ENCODE measurements at regions of chr17 and their contacts with region 1.

Region 1: GRCh38 chr17:45197555-45198334 is 23.9 kb upstream of the FMNL1 start:
- DNase-seq: peak; percentile 74 to 84 (median 76)
- H3K4me3 ChIP-seq: no peak overlapping the region
- H3K4me3 Mint-ChIP-seq: no peak overlapping the region
- H3K27ac ChIP-seq: no peak overlapping the region
- H3K27ac Mint-ChIP-seq: no peak overlapping the region
- H3K4me1 ChIP-seq: no peaks in the 10 kb centered on the region
- H3K4me1 Mint-ChIP-seq: peaks cover 0 to 4% (median 2%) of the 10 kb centered on the region in 4 donors
- H3K27me3 ChIP-seq: no peaks in the 10 kb centered on the region
- H3K27me3 Mint-ChIP-seq: no peaks in the 10 kb centered on the region

Region 2: GRCh38 chr17:44677136-44677535 is 520.6 kb before region 1 on chr17:
- CTCF ChIA-PET with region 1: no interaction called
- POLR2A ChIA-PET with region 1: no interaction called
- intact Hi-C with region 1: no loop called
- DNase-seq: no peak
- H3K4me3 ChIP-seq: no peak overlapping the region
- H3K4me3 Mint-ChIP-seq: no peak overlapping the region
- H3K27ac ChIP-seq: no peak overlapping the region
- H3K27ac Mint-ChIP-seq: peak overlapping the region in 1 of 7 donors; percentile 3
- H3K4me1 ChIP-seq: no peaks in the 10 kb centered on the region
- H3K4me1 Mint-ChIP-seq: no peaks in the 10 kb centered on the region
- H3K27me3 ChIP-seq: no peaks in the 10 kb centered on the region
- H3K27me3 Mint-ChIP-seq: no peaks in the 10 kb centered on the region

Region 3: DNA sequence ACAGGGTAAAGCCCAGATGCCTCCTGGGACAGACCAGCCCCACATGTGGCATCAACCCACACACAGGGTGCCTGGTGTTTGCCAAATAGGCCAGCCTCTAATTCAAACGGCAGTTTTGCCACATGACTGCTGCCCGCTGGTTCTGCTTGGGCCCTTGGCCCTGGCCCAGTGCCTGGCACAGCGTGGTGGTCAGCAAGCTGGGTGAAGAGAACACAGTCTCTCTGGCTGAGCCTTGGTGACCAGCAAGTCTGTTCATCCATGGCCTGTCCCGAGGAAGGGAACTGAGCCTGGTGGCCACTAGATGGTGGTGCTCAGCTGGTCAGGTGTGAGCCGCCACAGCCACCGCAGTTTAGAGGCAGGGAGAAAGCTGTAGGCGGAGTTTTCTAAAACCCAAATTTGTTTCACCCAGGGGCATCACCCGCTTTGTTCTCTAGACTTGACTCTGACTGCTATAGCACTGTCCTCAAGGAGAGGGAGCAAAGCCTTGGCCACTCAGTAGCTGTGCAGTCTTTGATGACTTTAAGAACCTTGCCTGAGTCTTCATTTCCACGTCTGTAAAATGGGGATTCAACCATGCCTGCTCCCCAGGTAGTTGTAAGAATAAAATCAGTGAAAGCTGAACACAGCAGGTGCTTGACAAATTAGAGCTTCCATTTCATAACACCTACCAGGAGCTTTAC is 277.7 kb before region 1 on chr17:
- CTCF ChIA-PET with region 1: interaction called, 7 read pairs
- POLR2A ChIA-PET with region 1: no interaction called
- intact Hi-C with region 1: loop called (anchors 2 kb)
- DNase-seq: peak in 4 of 5 donors; percentile 45 to 50 (median 48)
- H3K4me3 ChIP-seq: no peak overlapping the region
- H3K4me3 Mint-ChIP-seq: no peak overlapping the region
- H3K27ac ChIP-seq: no peak overlapping the region
- H3K27ac Mint-ChIP-seq: no peak overlapping the region
- H3K4me1 ChIP-seq: no peaks in the 10 kb centered on the region
- H3K4me1 Mint-ChIP-seq: peaks cover 0 to 3% (median 0%) of the 10 kb centered on the region in 4 donors
- H3K27me3 ChIP-seq: no peaks in the 10 kb centered on the region
- H3K27me3 Mint-ChIP-seq: peaks cover 4 to 6% of the 10 kb centered on the region in 2 donors

Region 4: DNA sequence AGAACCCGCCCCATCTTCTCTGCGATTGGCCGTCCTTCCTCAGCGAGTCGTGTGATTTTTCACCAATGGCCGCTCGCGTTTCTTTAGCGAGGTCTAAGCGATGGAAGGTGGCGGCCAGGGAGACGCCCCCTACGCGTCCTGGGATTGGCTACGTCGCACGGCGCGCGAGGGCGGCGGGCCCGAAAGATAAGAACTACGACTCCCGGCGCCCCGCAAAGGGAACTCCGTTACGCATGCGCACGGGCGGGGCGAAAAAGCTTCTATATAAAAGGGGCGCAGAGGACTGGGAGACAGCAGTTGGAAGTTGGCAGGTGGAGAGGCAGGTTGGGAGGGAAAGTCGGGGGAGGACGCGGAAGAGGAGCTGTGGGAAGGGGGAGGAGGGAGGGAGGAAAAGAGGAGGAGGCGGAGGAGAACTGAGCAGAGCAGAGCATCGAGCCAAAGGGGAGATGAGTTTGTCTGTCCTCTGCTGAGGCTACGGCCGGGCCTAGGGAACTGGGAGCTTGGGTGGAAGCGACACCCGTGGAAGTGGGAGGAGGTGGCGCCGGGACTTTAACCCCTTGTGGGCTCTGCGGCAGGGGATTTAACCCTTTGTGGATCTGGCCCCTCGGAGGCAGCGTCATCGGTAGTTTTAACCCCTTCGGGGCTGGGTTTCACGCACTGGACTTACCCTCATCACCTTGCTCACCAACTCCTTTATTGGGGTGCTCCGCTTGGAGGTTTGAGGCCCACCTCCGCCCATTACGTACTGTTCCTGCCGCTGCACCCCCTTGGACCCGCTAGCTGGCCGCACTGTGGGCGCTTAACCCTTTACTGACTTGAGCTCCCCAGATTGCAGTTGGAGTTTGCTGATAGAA is 49.3 kb before region 1 on chr17 and contains the start of gene HEXIM1:
- CTCF ChIA-PET with region 1: interaction called, 158 read pairs
- POLR2A ChIA-PET with region 1: interaction called, 63 read pairs
- intact Hi-C with region 1: loop called (anchors 1 kb)
- DNase-seq: peak; percentile 99 to 100 (median 99)
- H3K4me3 ChIP-seq: peak within 1 kb of the TSS; percentile 90 to 95
- H3K4me3 Mint-ChIP-seq: peak within 1 kb of the TSS; percentile 93 to 99 (median 96)
- H3K27ac ChIP-seq: peak within 1 kb of the TSS; percentile 88
- H3K27ac Mint-ChIP-seq: peak within 1 kb of the TSS; percentile 98 to 100 (median 100)
- H3K4me1 ChIP-seq: peaks cover 59% of the 10 kb centered on the region
- H3K4me1 Mint-ChIP-seq: peaks cover 26 to 61% (median 44%) of the 10 kb centered on the region in 4 donors
- H3K27me3 ChIP-seq: no peaks in the 10 kb centered on the region
- H3K27me3 Mint-ChIP-seq: peaks cover 1 to 5% of the 10 kb centered on the region in 2 donors
- total RNA-seq, gene HEXIM1: 28.8 to 30.8 TPM

Region 5: GRCh38 chr17:45161019-45161825 is 36.5 kb before region 1 on chr17:
- CTCF ChIA-PET with region 1: interaction called, 35 read pairs
- POLR2A ChIA-PET with region 1: interaction called, 11 read pairs
- intact Hi-C with region 1: no loop called
- DNase-seq: peak; percentile 99 to 100 (median 99)
- H3K4me3 ChIP-seq: peak overlapping the region; percentile 72 to 87
- H3K4me3 Mint-ChIP-seq: peak overlapping the region; percentile 85 to 99 (median 98)
- H3K27ac ChIP-seq: peak overlapping the region; percentile 99
- H3K27ac Mint-ChIP-seq: peak overlapping the region; percentile 90 to 100 (median 98)
- H3K4me1 ChIP-seq: peaks cover 33% of the 10 kb centered on the region
- H3K4me1 Mint-ChIP-seq: peaks cover 19 to 52% (median 39%) of the 10 kb centered on the region in 4 donors
- H3K27me3 ChIP-seq: no peaks in the 10 kb centered on the region
- H3K27me3 Mint-ChIP-seq: no peaks in the 10 kb centered on the region

Region 6: DNA sequence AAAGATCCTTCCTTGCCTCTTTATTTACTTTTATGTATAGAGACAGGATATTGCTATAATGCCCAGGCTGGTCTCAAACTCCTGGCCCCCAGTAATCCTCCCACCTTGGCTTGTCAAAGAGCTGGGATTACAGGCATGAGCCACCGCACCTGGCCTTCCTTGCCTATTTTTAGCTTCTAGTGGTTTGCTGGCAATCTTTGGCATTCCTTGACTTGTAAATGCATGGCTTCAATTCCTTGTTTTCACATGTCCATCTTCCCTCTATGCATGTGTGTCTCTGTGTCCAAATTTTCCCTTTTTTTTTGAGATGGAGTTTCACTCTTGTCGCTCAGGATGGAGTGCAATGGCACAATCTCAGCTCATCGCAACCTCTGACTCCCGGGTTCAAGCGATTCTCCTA is 13.6 kb before region 1 on chr17:
- CTCF ChIA-PET with region 1: interaction called, 17 read pairs
- POLR2A ChIA-PET with region 1: no interaction called
- intact Hi-C with region 1: no loop called
- DNase-seq: no peak
- H3K4me3 ChIP-seq: no peak overlapping the region
- H3K4me3 Mint-ChIP-seq: no peak overlapping the region
- H3K27ac ChIP-seq: no peak overlapping the region
- H3K27ac Mint-ChIP-seq: no peak overlapping the region
- H3K4me1 ChIP-seq: no peaks in the 10 kb centered on the region
- H3K4me1 Mint-ChIP-seq: no peaks in the 10 kb centered on the region
- H3K27me3 ChIP-seq: no peaks in the 10 kb centered on the region
- H3K27me3 Mint-ChIP-seq: no peaks in the 10 kb centered on the region

Measured in CD4-positive, alpha-beta memory T cell (primary cell).